Right ventricle myocardium inferior (tissue), 1 donor: ENCODE measurements at regions of chr16 and their contacts with region 1.

Region 1: DNA sequence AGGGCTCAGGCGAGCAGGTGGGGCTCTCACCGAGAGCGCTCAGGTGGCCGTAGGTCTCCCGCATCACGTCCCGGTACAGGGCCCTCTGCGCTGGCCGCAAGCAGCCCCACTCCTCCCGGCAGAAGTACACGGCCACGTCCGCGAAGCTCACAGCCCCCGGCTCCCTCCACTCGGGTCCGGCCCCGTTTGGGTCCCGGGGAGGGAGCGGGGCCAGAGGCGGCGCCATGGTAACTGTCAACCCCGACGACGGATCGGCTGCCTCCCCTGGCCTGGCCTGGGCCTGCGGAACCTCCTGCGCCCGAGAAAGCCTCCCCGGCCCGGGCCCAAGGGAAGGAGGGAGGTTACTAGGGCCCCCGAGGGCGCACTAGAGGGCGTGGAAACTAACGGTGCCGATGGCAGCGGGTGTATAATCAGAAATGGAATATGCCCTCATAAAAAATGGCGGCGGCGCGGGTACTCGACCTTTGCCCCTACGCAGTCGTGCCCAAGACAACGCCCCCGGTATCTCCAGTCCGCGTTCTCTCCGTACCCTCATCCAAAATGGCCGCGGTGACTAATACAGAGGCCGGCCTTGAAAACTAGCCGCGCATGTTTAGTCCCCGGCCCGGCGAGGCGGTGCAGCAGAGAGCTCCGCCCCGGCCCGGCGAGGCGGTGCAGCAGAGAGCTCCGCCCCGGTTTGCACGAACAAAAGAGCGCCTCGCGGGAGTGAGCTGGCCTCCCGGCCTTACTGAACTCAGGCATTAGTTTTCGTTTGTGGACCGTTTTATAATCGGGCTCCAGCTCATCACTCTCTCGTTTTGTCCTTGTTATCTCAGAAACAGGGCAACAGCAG is at the start of gene ZNF764:
- DNase-seq: peak; percentile 99
- ATAC-seq: peak; percentile 98
- total RNA-seq, gene ZNF764: 10.0 TPM

Region 2: DNA sequence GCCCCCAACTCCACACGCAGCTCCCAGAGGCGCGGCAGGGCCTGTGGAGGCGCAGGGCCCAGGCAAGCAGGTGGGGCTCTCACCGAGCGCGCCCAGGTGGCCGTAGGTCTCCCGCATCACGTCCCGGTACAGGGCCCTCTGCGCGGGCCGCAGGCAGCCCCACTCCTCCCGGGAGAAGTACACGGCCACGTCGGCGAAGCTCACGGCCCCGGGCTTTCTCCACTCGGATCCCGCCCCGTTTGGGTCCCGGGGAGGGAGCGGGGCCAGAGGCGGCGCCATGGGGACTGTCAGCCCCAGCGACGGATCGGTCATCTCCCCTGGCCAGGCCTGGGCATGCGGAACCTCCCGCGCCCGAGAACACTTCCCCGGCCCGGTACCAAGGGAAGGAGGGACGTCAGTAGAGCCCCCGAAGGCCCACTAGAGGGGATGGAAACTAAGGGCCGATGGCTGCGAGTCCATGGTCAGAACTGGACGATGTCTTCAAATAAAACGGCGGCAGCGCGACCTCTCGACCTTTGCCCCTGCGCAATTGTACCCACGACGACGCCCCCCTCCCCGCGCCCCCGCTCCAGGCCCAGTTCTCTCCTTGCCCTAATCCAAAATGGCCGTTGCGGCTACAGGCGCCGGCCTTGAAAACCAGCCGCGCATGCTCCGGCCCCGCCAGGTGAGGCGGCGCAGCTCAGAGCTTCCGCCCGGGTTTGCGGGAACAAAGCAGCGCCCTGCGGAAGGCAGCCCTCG is 23.6 kb before region 1 on chr16 and contains the start of gene ZNF747:
- intact Hi-C with region 1: loop called (anchors 1 kb)
- DNase-seq: peak; percentile 95
- ATAC-seq: peak; percentile 90
- total RNA-seq, gene ZNF747: 5.7 TPM